ENCODE measurements at regions of chr7 and their contacts with region 1.

Region 1: GRCh38 chr7:90595801-90596671 is at the start of gene CDK14:
- DNase-seq: peak; percentile 81 to 88
- H3K4me3 ChIP-seq: peak within 1 kb of the TSS; percentile 89
- H3K4me3 Mint-ChIP-seq: peak within 1 kb of the TSS; percentile 95
- H3K27ac Mint-ChIP-seq: peak within 1 kb of the TSS; percentile 75
- H3K4me1 ChIP-seq: 0 out of 2 replicates have a peak, but pooled peaks cover 2% of the 10 kb centered on the region
- H3K4me1 Mint-ChIP-seq: peaks cover 7% of the 10 kb centered on the region
- H3K27me3 ChIP-seq: no peaks in the 10 kb centered on the region
- H3K27me3 Mint-ChIP-seq: no peaks in the 10 kb centered on the region
- CTCF ChIP-seq: peak; percentile 9 to 51
- total RNA-seq, gene CDK14: 18.2 and 22.5 TPM in 2 replicates

Region 2: DNA sequence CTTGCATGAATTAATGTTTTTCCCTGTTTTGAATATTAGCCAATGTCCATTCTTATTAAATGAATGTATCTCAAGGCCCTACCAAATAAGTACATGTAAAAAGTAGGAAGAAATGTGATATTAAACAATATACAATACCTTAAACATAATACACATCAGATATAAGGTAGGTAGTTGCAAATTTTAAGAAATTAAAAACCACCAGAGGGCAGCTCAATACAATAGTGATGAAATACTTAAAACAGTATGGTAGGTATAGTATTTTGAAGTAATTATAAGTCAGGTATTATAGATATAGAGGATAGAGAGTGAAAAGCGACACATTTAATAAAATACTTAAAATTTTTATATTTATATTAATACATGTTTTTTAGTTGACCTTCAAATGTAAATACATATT is 43.5 kb before region 1 on chr7:
- CTCF ChIA-PET with region 1: interaction called, 3 read pairs
- POLR2A ChIA-PET with region 1: no interaction called
- intact Hi-C with region 1: loop called (anchors 2 kb)
- DNase-seq: no peak
- H3K4me3 ChIP-seq: no peak overlapping the region
- H3K4me3 Mint-ChIP-seq: no peak overlapping the region
- H3K27ac Mint-ChIP-seq: no peak overlapping the region
- H3K4me1 ChIP-seq: no peaks in the 10 kb centered on the region
- H3K4me1 Mint-ChIP-seq: no peaks in the 10 kb centered on the region
- H3K27me3 ChIP-seq: no peaks in the 10 kb centered on the region
- H3K27me3 Mint-ChIP-seq: peaks cover 20% of the 10 kb centered on the region
- CTCF ChIP-seq: peak; percentile 9 to 38

Region 3: DNA sequence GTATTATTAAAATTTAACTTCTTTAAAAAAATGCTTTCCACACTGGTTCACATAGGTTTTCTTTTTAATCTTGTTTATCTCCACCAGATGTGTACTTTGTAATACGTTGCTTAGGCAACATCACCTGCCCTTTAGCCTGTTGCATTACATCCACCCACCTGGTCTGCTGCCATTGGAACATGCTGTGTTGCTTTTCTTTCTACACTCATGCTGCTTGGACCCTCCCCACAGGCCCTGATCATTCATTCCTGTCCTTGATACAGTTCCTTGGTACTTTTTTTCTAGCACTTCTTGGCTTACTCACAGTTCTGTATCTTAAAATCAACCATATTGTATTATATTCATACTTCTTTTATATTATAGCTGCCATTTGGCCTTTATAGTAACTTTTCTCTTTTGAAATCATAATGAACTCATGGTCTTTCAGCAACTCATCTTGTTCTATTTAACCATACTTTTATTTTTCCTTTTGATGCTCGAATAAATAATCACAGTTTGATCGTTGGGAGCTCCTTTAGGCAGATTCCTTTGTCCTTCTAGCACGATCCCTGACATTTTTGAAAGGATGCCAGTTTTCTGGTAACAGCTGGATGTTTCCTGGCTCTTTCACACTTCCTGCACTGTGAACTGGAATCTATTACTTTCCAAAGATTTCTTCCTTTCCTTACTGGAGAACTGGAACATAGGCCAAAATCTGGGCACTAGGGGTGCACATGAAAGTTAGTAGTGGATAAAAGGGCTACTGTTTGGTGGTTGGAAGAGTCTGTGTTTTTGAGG is 125.1 kb after region 1 on chr7:
- CTCF ChIA-PET with region 1: interaction called, 3 read pairs
- POLR2A ChIA-PET with region 1: no interaction called
- intact Hi-C with region 1: loop called (anchors 5 kb)
- DNase-seq: peak; percentile 89 to 92
- H3K4me3 ChIP-seq: no peak overlapping the region
- H3K4me3 Mint-ChIP-seq: peak overlapping the region; percentile 30
- H3K27ac Mint-ChIP-seq: peak overlapping the region; percentile 87
- H3K4me1 ChIP-seq: peaks cover 62% of the 10 kb centered on the region
- H3K4me1 Mint-ChIP-seq: peaks cover 37% of the 10 kb centered on the region
- H3K27me3 ChIP-seq: no peaks in the 10 kb centered on the region
- H3K27me3 Mint-ChIP-seq: no peaks in the 10 kb centered on the region
- CTCF ChIP-seq: no peak

Region 4: DNA sequence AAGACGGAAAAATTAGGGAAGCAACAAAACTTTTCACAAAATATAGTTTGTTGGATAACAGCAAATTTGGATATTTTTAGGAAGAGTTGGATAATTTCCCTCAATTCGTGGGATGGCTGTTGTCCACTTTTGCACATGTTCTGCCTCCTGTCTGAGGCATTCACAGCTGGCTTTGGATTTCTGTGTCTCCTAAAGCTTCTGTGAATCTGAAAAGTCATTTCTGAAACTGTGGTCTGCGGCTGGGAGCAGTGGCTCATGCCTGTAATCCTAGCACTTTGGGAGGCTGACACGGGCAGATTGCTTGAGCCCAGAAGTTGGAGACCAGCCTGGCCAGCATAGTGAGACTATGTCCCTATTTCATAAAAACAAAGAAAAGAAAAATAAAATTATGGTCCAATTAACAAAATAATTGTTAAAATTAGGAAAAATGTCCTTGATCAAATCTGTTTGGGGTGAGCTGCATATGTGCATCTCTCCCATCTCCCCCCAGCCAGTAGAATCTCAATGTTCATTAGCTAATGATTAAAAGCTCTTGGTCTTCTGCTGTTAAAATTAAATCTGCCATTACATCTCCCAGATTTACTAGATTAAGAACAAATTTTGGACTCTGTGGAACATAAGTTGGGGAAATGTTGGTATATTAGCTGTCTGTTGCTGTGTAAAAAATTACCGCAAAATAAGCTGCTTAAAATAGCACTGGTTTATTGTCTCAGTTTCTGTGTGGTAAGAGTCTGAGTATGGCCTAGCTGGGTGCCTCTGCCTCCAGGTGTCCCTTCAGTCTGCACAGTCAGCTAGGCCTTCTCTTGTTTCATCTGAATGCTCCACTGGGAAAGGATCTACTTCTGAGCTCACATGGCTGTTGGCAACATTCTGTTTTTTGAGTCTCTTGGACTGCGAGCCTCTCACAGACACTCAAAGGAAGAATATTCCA is 336.2 kb after region 1 on chr7:
- CTCF ChIA-PET with region 1: interaction called, 6 read pairs
- POLR2A ChIA-PET with region 1: no interaction called
- intact Hi-C with region 1: loop called (anchors 1 kb)
- DNase-seq: no peak
- H3K4me3 ChIP-seq: no peak overlapping the region
- H3K4me3 Mint-ChIP-seq: no peak overlapping the region
- H3K27ac Mint-ChIP-seq: no peak overlapping the region
- H3K4me1 ChIP-seq: no peaks in the 10 kb centered on the region
- H3K4me1 Mint-ChIP-seq: no peaks in the 10 kb centered on the region
- H3K27me3 ChIP-seq: no peaks in the 10 kb centered on the region
- H3K27me3 Mint-ChIP-seq: no peaks in the 10 kb centered on the region
- CTCF ChIP-seq: no peak

Region 5: GRCh38 chr7:91201442-91202113 is 605.5 kb after region 1 on chr7:
- CTCF ChIA-PET with region 1: no interaction called
- POLR2A ChIA-PET with region 1: no interaction called
- intact Hi-C with region 1: no loop called
- DNase-seq: no peak
- H3K4me3 ChIP-seq: no peak overlapping the region
- H3K4me3 Mint-ChIP-seq: no peak overlapping the region
- H3K27ac Mint-ChIP-seq: no peak overlapping the region
- H3K4me1 ChIP-seq: no peaks in the 10 kb centered on the region
- H3K4me1 Mint-ChIP-seq: no peaks in the 10 kb centered on the region
- H3K27me3 ChIP-seq: no peaks in the 10 kb centered on the region
- H3K27me3 Mint-ChIP-seq: no peaks in the 10 kb centered on the region
- CTCF ChIP-seq: no peak